ENCODE measurements at regions of chr14 and their contacts with region 1.

Region 1: GRCh38 chr14:69107407-69108003 is 45.4 kb downstream of the DCAF5 start:
- DNase-seq: no peak
- ATAC-seq: peak; percentile 50
- H3K4me3 Mint-ChIP-seq: no peak overlapping the region
- H3K27ac Mint-ChIP-seq: no peak overlapping the region
- H3K4me1 Mint-ChIP-seq: no peaks in the 10 kb centered on the region
- H3K27me3 Mint-ChIP-seq: no peaks in the 10 kb centered on the region
- CTCF ChIP-seq: no peak

Region 2: GRCh38 chr14:67883717-67884116 is 1223.8 kb before region 1 on chr14:
- CTCF ChIA-PET with region 1: interaction called, 6 read pairs
- POLR2A ChIA-PET with region 1: no interaction called
- intact Hi-C with region 1: loop called (anchors 1 kb)
- DNase-seq: no peak
- ATAC-seq: no peak
- H3K4me3 Mint-ChIP-seq: no peak overlapping the region
- H3K27ac Mint-ChIP-seq: no peak overlapping the region
- H3K4me1 Mint-ChIP-seq: peaks cover 4% of the 10 kb centered on the region
- H3K27me3 Mint-ChIP-seq: no peaks in the 10 kb centered on the region
- CTCF ChIP-seq: no peak

Region 3: DNA sequence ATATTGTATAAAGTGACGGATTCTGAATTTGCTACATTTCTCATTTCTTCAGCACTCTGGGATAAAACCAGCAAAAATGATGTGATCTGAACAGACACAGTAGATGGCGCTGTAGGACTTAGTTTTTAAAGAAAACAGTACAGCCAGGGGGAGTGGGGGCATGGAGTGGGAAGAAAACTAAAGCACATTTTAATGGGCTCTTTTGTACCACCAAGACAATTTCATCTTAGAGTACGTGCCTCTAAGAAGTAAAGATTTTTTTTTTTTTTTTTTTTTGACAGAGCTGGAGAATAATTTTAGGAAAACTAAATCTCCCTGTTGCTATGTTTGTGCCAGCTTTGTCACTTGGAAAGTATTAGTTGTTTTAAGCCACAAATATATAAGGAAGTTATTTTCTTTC is 1163.6 kb before region 1 on chr14:
- CTCF ChIA-PET with region 1: interaction called, 17 read pairs
- POLR2A ChIA-PET with region 1: no interaction called
- intact Hi-C with region 1: no loop called
- DNase-seq: no peak
- ATAC-seq: peak; percentile 54
- H3K4me3 Mint-ChIP-seq: no peak overlapping the region
- H3K27ac Mint-ChIP-seq: no peak overlapping the region
- H3K4me1 Mint-ChIP-seq: peaks cover 8% of the 10 kb centered on the region
- H3K27me3 Mint-ChIP-seq: no peaks in the 10 kb centered on the region
- CTCF ChIP-seq: no peak

Region 4: DNA sequence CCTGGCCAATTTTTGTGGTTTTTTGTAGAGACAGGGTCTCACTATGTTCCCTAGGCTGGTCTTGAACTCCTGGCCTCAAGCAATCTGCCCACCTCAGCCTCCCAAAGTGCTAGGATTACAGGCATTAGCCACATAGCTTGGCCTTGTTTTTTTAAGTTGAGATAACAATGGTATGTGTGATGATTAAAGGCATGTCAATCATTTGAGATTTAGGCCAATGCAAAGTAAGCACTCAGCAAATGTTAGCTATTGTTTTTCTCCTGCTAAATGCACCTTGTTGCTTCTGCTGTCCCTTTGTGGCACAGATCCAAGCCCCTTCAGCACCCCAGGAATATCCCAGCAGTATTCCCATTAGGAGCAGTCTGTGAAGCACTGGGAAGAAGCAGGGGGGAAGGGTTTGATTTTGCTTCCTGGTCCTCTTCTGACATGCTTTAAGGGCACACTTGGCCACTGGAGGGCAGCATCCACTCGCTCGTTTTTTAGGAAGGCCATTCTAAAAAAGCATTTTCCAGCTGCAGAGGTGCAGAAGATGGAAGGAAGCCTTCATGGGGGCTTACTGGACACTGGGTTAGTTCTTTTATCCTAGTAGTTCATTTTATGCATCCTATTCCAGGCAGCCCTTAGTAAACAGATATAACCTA is 244.4 kb before region 1 on chr14:
- CTCF ChIA-PET with region 1: interaction called, 6 read pairs
- POLR2A ChIA-PET with region 1: no interaction called
- intact Hi-C with region 1: loop called (anchors 1 kb)
- DNase-seq: peak; percentile 26
- ATAC-seq: no peak
- H3K4me3 Mint-ChIP-seq: no peak overlapping the region
- H3K27ac Mint-ChIP-seq: no peak overlapping the region
- H3K4me1 Mint-ChIP-seq: peaks cover 3% of the 10 kb centered on the region
- H3K27me3 Mint-ChIP-seq: no peaks in the 10 kb centered on the region
- CTCF ChIP-seq: peak; percentile 17

Region 5: GRCh38 chr14:69153131-69153872 is 45.8 kb after region 1 on chr14:
- CTCF ChIA-PET with region 1: no interaction called
- POLR2A ChIA-PET with region 1: no interaction called
- intact Hi-C with region 1: no loop called
- DNase-seq: peak; percentile 81
- ATAC-seq: peak; percentile 93
- H3K4me3 Mint-ChIP-seq: peak overlapping the region; percentile 95
- H3K27ac Mint-ChIP-seq: peak overlapping the region; percentile 88
- H3K4me1 Mint-ChIP-seq: peaks cover 28% of the 10 kb centered on the region
- H3K27me3 Mint-ChIP-seq: no peaks in the 10 kb centered on the region
- CTCF ChIP-seq: no peak